ENCODE measurements at regions of chr15 and their contacts with region 1.

Region 1: GRCh38 chr15:71079208-71080021 is 35.9 kb upstream of the THSD4 start:
- DNase-seq: peak in 1 of 5 donors; percentile 40
- ATAC-seq: peak in 3 of 4 donors; percentile 6 to 22 (median 20)
- H3K4me3 ChIP-seq: no peak overlapping the region
- H3K27ac ChIP-seq: no peak overlapping the region
- H3K4me1 ChIP-seq: peaks cover 0 to 34% (median 16%) of the 10 kb centered on the region in 12 donors
- H3K27me3 ChIP-seq: no peaks in the 10 kb centered on the region
- CTCF ChIP-seq: no peak
- POLR2A ChIP-seq: no peak

Region 2: DNA sequence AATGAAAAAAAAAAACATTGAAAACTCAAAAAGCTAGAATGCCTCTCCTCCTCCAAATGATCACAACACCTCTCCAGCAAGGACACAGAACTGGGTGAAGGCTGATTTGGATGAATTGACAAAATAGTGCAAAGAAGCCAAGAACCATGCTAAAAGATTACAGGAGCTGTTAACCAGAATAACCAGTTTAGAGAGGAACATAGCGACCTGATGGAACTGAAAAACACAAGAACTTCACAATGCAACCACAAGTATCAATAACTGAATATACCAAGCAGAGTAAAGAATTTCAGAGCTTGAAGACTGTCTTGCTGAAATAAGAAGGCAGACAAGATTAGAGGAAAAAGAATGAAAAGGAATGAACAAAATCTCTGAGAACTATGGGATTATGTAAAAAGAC is 54.8 kb before region 1 on chr15:
- intact Hi-C with region 1: loop called in 1 of 10 experiments (anchors 10 kb)
- DNase-seq: no peak
- ATAC-seq: no peak
- H3K4me3 ChIP-seq: no peak overlapping the region
- H3K27ac ChIP-seq: no peak overlapping the region
- H3K4me1 ChIP-seq: no peaks in the 10 kb centered on the region
- H3K27me3 ChIP-seq: no peaks in the 10 kb centered on the region
- CTCF ChIP-seq: no peak
- POLR2A ChIP-seq: no peak

Region 3: GRCh38 chr15:71357321-71357732 is 277.9 kb after region 1 on chr15:
- intact Hi-C with region 1: no loop called
- DNase-seq: peak in 4 of 5 donors; percentile 56 to 76 (median 59)
- ATAC-seq: peak; percentile 41 to 88 (median 81)
- H3K4me3 ChIP-seq: no peak overlapping the region
- H3K27ac ChIP-seq: peak overlapping the region in 9 of 12 donors; percentile 3 to 72 (median 54)
- H3K4me1 ChIP-seq: peaks cover 0 to 38% (median 21%) of the 10 kb centered on the region in 12 donors
- H3K27me3 ChIP-seq: no peaks in the 10 kb centered on the region
- CTCF ChIP-seq: no peak
- POLR2A ChIP-seq: no peak